Activated T-helper 1 cell treated with anti-CD3 and anti-CD28 coated beads, Interleukin-12 subunit alpha, Interleukin-12 subunit beta, Interleukin-2, Interleukin-4 antibody, amounts not matched to agents 30 ng/mL and 10 ng/mL and 1 ng/mL, durations not matched to agents 14 hours and 24 hours and 36 hours (primary cell): ENCODE measurements at regions of chr14 and their contacts with region 1.

Region 1: GRCh38 chr14:54773171-54773975 is 129.3 kb downstream of the GCH1 start:
- DNase-seq: peak; percentile 73
- H3K4me3 Mint-ChIP-seq: peak overlapping the region; percentile 68
- H3K27ac Mint-ChIP-seq: peak overlapping the region; percentile 79
- H3K4me1 Mint-ChIP-seq: peaks cover 40% of the 10 kb centered on the region
- H3K27me3 Mint-ChIP-seq: peaks cover 40% of the 10 kb centered on the region

Region 2: GRCh38 chr14:54488646-54489317 is 284.6 kb before region 1 on chr14 and contains the start of gene GMFB:
- intact Hi-C with region 1: loop called (anchors 1 kb)
- DNase-seq: peak; percentile 79
- H3K4me3 Mint-ChIP-seq: peak within 1 kb of the TSS; percentile 87
- H3K27ac Mint-ChIP-seq: peak within 1 kb of the TSS; percentile 88
- H3K4me1 Mint-ChIP-seq: peaks cover 57% of the 10 kb centered on the region
- H3K27me3 Mint-ChIP-seq: no peaks in the 10 kb centered on the region
- total RNA-seq, gene GMFB: 39.5 and 39.7 TPM in 2 replicates

Region 3: GRCh38 chr14:54627540-54628363 is 145.6 kb before region 1 on chr14:
- intact Hi-C with region 1: loop called (anchors 2 kb)
- DNase-seq: peak; percentile 36
- H3K4me3 Mint-ChIP-seq: peak overlapping the region; percentile 62
- H3K27ac Mint-ChIP-seq: peak overlapping the region; percentile 49
- H3K4me1 Mint-ChIP-seq: peaks cover 36% of the 10 kb centered on the region
- H3K27me3 Mint-ChIP-seq: no peaks in the 10 kb centered on the region

Region 4: DNA sequence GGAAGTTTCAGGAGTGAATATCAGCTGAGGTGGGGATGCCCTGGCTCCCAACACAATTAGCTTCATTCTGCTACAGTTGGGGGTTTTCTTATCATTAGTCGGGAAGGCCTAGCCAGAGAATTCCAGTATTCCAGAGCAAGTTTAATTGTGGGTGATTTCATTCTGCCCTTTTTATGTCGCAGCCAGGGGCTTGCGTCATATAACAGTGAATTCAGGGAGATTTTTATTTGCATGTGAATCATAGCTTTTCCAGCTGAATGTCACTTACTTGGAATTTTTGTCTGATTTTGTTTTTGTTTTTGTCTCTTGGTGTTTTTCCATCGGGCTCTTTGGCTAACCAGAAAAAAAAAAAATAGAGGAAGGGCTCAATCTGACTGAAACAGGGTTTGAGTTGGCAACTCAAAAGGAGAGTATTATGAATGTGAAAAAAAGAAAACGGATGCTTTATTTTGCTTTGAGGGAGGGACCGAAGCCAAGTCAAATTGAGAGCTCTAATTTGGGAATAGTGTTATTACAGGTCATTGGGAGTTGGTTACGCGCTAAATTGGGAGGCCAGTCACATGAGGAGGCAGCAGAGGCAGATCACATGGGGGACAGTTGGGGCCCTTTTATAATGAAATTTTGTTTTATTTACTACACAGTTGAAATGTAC is 87.0 kb before region 1 on chr14:
- intact Hi-C with region 1: loop called (anchors 1 kb)
- DNase-seq: no peak
- H3K4me3 Mint-ChIP-seq: no peak overlapping the region
- H3K27ac Mint-ChIP-seq: no peak overlapping the region
- H3K4me1 Mint-ChIP-seq: peaks cover 17% of the 10 kb centered on the region
- H3K27me3 Mint-ChIP-seq: peaks cover 26% of the 10 kb centered on the region

Region 5: GRCh38 chr14:54737132-54737711 is 36.2 kb before region 1 on chr14:
- intact Hi-C with region 1: loop called (anchors 1 kb)
- DNase-seq: no peak
- H3K4me3 Mint-ChIP-seq: no peak overlapping the region
- H3K27ac Mint-ChIP-seq: peak overlapping the region; percentile 37
- H3K4me1 Mint-ChIP-seq: peaks cover 46% of the 10 kb centered on the region
- H3K27me3 Mint-ChIP-seq: peaks cover 35% of the 10 kb centered on the region

Region 6: DNA sequence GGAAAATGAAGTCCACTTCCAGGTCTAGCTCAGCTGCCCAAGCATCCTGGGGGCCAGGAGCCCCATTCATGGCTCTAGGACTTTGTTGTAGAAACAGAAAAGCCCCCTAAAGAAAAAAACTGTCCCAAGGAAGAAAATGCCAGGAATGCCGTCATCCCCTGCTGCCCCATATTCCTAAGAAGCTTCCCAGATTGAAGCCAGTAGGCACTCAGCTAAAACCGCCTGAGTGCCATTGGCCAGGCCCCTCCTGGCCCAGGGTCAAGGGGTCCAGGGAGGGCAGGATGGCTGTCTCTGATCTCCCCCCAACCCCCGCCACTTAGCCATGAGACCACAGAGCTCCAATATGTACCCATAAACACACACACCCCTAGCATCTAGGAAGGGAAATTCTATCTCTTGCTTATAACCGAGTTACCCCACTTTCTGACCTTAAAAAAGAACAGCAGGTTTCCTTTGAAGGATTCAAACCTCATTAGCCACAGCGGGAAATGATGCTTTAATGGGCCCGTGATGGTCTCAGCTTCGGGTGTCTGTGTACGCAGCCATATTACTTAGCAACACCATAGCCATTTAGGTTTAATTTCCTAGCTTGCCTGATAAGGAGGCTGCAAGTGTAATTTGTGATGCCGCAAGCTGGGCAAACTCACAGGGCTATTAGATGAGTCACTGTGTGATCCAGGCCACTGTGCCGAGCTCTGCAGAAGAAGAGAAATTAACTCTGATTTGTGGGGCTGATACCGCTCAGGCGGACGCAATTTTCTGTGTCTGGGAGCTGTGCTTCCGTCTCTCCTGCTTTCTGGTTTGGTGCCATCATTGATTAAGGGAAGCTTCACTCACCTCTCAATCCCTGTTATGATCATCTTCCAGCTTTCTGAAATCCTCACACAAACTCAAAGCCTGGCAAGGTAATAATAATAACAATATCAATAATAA is 45.1 kb after region 1 on chr14:
- intact Hi-C with region 1: no loop called
- DNase-seq: no peak
- H3K4me3 Mint-ChIP-seq: no peak overlapping the region
- H3K27ac Mint-ChIP-seq: no peak overlapping the region
- H3K4me1 Mint-ChIP-seq: no peaks in the 10 kb centered on the region
- H3K27me3 Mint-ChIP-seq: peaks cover 3% of the 10 kb centered on the region

Region 7: GRCh38 chr14:54902521-54903420 is 129.4 kb after region 1 on chr14 and contains the start of gene GCH1:
- intact Hi-C with region 1: loop called (anchors 2 kb)
- DNase-seq: peak; percentile 81
- H3K4me3 Mint-ChIP-seq: peak within 1 kb of the TSS; percentile 89
- H3K27ac Mint-ChIP-seq: peak within 1 kb of the TSS; percentile 85
- H3K4me1 Mint-ChIP-seq: peaks cover 46% of the 10 kb centered on the region
- H3K27me3 Mint-ChIP-seq: no peaks in the 10 kb centered on the region
- total RNA-seq, gene GCH1: 61.4 and 62.4 TPM in 2 replicates